Right ventricle myocardium inferior (tissue), 1 donor: ENCODE measurements at regions of chr21 and their contacts with region 1.

Region 1: DNA sequence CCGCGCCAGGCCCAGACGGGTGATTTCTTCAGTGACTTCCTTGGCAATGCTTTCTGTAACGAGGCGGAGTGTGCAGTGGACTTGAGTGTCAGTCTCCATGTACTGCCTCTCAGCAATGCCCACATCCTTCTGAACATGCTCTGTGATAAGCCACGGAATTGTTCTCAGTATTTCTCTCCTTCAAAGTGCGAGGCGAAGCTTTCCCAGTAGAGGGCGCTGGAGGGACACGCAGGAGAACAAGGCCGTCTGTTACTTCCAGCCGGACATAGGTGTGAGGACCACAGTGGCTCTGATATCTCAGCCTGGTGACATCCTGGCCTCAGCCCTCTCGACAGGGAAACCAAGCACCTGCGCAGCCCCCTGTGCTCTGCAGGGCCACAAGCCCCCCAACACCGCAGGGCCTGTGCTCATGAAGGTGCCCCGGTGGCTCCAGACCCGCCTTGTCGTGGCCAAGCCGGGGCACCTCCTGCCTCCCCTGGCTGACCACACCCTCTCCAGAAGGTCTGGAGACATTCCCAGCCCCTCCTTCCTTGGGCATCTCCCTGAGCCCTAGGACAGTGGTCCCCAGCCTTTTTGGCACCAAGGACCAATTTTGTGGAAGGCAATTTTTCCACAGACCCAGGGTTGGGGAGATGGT is 46.1 kb upstream of the BACE2 start:
- DNase-seq: peak; percentile 74
- ATAC-seq: peak; percentile 80

Region 2: DNA sequence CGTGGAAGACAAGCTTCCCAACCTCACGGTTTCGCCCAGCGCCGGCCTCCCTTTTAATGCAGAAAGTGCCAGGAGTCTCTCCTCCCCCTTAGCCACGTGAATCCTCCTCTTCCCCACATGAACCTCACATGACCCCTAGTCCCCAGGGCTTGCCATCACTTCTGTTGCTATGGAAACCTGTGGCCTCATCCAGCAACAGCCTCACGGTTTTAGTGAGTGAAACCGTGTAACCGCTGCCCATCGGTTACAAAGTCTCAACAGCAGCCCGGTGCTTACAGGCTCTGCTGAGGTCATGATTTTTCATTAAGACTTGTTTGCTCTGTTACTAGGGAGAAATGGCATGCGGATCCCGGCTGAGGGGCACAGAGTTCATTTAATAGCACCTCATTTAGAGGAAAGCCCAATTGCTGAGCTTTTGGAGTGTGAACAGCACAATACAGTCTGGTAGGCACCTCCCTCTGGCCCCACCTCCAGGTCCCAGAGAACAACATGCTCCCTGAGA is 97.1 kb before region 1 on chr21:
- intact Hi-C with region 1: no loop called
- DNase-seq: no peak
- ATAC-seq: no peak

Region 3: DNA sequence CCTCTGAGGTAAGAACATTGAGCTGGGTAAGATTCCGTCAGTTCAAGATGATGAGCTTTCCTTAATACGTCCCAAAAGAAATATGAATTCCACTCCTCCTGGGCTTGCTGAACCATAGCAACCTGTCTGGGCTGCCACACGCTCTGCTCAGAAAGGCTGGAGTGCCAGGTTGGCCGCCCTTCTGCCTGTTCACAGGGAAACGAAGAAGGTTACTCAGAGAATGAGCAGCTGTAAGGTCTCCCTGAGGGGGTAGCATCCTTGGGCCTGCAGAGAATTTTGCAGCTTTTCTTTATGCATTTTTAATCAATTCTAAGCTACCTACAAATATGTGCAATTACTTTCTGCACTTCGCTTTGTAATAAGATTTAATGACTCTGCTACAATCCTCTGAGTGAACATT is 84.7 kb before region 1 on chr21:
- intact Hi-C with region 1: no loop called
- DNase-seq: no peak
- ATAC-seq: no peak

Region 4: GRCh38 chr21:41460578-41461527 is 338.9 kb after region 1 on chr21:
- intact Hi-C with region 1: loop called (anchors 5 kb)
- DNase-seq: peak; percentile 89
- ATAC-seq: peak; percentile 89

Region 5: DNA sequence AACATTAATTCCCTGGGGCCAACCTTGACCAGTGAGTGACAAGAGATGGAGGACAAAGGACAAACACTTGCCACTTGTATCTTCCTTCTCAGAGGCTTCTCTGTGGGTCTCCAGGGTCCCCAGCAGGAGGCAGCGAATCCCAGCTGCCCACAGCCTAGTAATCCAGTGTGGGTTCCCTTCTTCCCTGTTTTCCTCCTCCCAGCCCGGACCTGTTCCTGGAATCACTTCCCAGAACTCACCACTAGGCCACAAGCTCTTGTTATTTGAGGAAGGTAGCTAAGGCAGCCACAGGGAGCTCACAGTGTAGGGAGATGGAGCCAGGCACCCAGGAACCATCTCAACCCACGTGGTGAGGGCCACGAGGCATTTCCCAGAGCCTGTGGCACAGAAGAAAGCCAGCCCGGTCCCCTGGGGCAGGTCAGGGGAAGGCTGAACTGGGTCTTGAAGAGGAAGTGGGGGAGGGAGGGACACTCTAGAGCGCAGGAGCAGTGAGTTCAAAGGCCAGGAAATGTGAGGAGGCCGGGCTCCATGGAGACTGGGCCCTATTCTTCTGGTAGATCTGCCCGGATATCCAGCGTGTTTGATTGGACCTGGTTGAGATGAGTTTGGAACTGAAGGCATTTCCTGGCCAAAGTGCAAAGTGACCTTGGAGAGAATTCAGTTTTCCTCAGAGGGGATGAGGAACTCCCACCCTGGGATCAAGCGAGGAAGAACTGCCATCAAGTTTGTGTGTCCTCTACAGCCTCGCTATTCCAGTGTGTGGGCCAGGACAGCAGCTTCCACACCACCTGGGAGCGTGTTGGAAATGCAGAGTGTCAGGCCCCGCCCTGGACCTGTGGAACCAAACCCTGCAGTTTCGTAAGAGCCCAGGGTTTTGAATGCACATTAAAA is 852.2 kb after region 1 on chr21:
- intact Hi-C with region 1: no loop called
- DNase-seq: no peak
- ATAC-seq: peak; percentile 49